ENCODE measurements at regions of chr2 and their contacts with region 1.

Region 1: DNA sequence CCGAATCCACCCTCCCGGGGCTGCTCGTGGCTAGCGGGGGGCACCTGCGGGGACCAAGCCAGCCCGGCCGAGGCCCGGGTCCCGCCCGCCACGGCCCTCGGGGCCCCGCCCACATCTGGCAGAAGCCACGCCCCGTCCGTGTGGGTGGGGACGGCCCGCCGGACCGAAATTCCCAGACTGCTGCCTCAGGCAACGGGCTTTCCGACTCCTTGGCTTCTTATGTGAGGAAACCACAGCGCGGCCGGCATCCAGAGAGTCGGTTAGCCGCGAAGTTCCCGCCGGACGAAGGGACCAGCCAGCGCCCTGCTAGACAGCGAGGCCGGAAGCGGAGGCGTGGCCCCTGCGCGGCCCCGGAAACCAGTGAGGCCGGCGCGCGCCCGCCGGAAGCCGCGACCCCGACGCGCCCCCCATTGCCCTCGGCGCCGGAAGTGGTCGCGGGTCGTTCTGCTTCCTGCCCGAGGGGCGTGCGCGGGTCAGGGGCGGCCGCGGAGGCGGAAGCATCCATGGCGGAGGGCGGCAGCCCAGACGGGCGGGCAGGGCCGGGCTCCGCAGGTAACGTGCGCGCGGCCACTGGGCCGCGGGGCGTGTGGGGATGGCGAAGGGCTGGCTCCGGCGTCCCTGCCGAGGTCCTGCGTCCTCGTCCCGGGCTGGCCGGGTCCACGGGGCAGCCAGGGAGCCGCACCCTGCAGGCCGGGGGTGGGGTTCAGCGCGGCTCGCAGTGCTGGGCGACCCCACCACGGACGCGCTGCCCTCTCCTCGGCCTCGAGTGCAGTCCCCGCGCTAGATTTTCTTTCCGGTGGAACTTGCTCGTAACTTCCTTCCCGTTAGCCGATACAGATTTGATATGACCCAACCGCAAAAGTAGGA is at the start of gene ASB1:
- DNase-seq: peak; percentile 38 to 58 (median 51)
- H3K4me3 ChIP-seq: peak within 1 kb of the TSS; percentile 74 to 93 (median 84)
- H3K4me3 Mint-ChIP-seq: peak within 1 kb of the TSS; percentile 91 to 95
- H3K27ac ChIP-seq: peak within 1 kb of the TSS; percentile 69 to 87
- H3K27ac Mint-ChIP-seq: peak within 1 kb of the TSS; percentile 85 to 96 (median 92)
- H3K4me1 ChIP-seq: peaks cover 24 to 29% of the 10 kb centered on the region in 2 donors
- H3K4me1 Mint-ChIP-seq: peaks cover 47% of the 10 kb centered on the region
- H3K27me3 ChIP-seq: no peaks in the 10 kb centered on the region
- H3K27me3 Mint-ChIP-seq: peaks cover 2 to 3% (median 2%) of the 10 kb centered on the region in 3 donors
- CTCF ChIP-seq: no peak
- polyA plus RNA-seq, gene ASB1: 15.1 to 22.0 (median 16.0) TPM

Region 2: DNA sequence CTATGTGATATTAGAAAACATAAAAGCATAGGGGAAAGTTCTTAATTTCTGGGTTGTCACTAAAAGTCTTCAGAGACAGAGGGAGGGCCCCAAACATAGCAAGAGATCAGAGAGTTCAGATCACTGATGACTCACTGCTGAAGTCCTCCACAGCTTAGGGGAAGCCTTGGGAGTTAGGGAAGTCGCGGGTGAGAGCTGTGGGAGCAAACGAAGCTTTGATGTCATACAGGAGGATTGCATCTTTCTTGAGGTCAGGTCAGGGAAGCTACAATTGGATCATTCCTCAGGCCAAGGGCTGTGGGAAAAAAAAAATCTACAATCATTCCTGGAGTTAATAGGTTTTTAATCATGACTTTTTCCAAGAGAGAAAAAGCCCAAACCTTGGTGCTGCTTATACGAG is 1245.0 kb before region 1 on chr2:
- intact Hi-C with region 1: no loop called
- DNase-seq: no peak
- H3K4me3 ChIP-seq: no peak overlapping the region
- H3K4me3 Mint-ChIP-seq: no peak overlapping the region
- H3K27ac ChIP-seq: no peak overlapping the region
- H3K27ac Mint-ChIP-seq: no peak overlapping the region
- H3K4me1 ChIP-seq: no peaks in the 10 kb centered on the region
- H3K4me1 Mint-ChIP-seq: no peaks in the 10 kb centered on the region
- H3K27me3 ChIP-seq: peaks cover 0 to 2% of the 10 kb centered on the region in 2 donors
- H3K27me3 Mint-ChIP-seq: peaks cover 2 to 21% (median 15%) of the 10 kb centered on the region in 3 donors
- CTCF ChIP-seq: no peak

Region 3: DNA sequence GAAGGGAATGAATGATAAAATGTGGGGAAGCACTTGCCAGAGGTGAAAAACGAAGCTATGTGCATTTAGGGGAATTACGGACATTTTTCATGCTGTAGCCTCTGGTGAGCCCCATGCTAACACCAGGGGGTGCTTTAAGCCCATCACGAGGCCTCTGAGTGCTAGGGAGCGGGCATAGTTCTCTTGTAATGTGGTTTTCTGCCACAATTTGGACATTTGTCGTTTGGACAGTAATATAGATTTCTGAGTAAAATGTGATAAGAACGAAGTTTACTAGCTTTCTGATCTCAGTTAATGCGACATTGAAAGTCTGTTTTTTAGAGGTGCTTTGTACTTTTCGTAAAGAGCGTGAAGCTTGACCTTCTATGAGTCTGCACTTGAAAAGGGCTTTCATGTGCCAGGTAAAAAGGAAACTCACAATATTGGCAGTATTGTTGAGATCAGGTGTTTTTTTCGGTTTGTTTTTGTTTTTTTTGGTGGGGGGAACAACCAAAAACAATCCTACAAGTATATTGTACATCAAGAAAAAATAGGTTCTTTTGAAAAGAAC is 55.9 kb before region 1 on chr2:
- intact Hi-C with region 1: loop called (anchors 2 to 5 kb)
- DNase-seq: peak; percentile 73 to 77 (median 76)
- H3K4me3 ChIP-seq: no peak overlapping the region
- H3K4me3 Mint-ChIP-seq: peak overlapping the region; percentile 11 to 79
- H3K27ac ChIP-seq: no peak overlapping the region
- H3K27ac Mint-ChIP-seq: no peak overlapping the region
- H3K4me1 ChIP-seq: peaks cover 16 to 18% of the 10 kb centered on the region in 2 donors
- H3K4me1 Mint-ChIP-seq: peaks cover 42% of the 10 kb centered on the region
- H3K27me3 ChIP-seq: no peaks in the 10 kb centered on the region
- H3K27me3 Mint-ChIP-seq: peaks cover 0 to 4% (median 0%) of the 10 kb centered on the region in 3 donors
- CTCF ChIP-seq: peak; percentile 80

Region 4: GRCh38 chr2:238379096-238379810 is 47.5 kb before region 1 on chr2:
- intact Hi-C with region 1: loop called in 1 of 2 experiments (anchors 5 kb)
- DNase-seq: peak; percentile 60 to 82 (median 71)
- H3K4me3 ChIP-seq: peak overlapping the region in 1 of 3 experiments; percentile 32
- H3K4me3 Mint-ChIP-seq: peak overlapping the region in 1 of 2 donors; percentile 48
- H3K27ac ChIP-seq: peak overlapping the region; percentile 13 to 54
- H3K27ac Mint-ChIP-seq: peak overlapping the region; percentile 52 to 97 (median 82)
- H3K4me1 ChIP-seq: peaks cover 79 to 87% of the 10 kb centered on the region in 2 donors
- H3K4me1 Mint-ChIP-seq: peaks cover 95% of the 10 kb centered on the region
- H3K27me3 ChIP-seq: no peaks in the 10 kb centered on the region
- H3K27me3 Mint-ChIP-seq: peaks cover 0 to 4% (median 0%) of the 10 kb centered on the region in 3 donors
- CTCF ChIP-seq: no peak

Region 5: GRCh38 chr2:238389926-238390597 is 36.7 kb before region 1 on chr2:
- intact Hi-C with region 1: loop called in 1 of 2 experiments (anchors 5 kb)
- DNase-seq: no peak
- H3K4me3 ChIP-seq: peak overlapping the region in 1 of 3 experiments; percentile 15
- H3K4me3 Mint-ChIP-seq: peak overlapping the region in 1 of 2 donors; percentile 73
- H3K27ac ChIP-seq: peak overlapping the region; percentile 11 to 29
- H3K27ac Mint-ChIP-seq: peak overlapping the region in 5 of 7 donors; percentile 41 to 84 (median 77)
- H3K4me1 ChIP-seq: peaks cover 56 to 63% of the 10 kb centered on the region in 2 donors
- H3K4me1 Mint-ChIP-seq: peaks cover 56% of the 10 kb centered on the region
- H3K27me3 ChIP-seq: no peaks in the 10 kb centered on the region
- H3K27me3 Mint-ChIP-seq: peaks cover 0 to 2% (median 0%) of the 10 kb centered on the region in 3 donors
- CTCF ChIP-seq: no peak

Region 6: GRCh38 chr2:238523158-238524110 is 96.6 kb after region 1 on chr2:
- intact Hi-C with region 1: no loop called
- DNase-seq: no peak
- H3K4me3 ChIP-seq: no peak overlapping the region
- H3K4me3 Mint-ChIP-seq: no peak overlapping the region
- H3K27ac ChIP-seq: no peak overlapping the region
- H3K27ac Mint-ChIP-seq: no peak overlapping the region
- H3K4me1 ChIP-seq: no peaks in the 10 kb centered on the region
- H3K4me1 Mint-ChIP-seq: peaks cover 9% of the 10 kb centered on the region
- H3K27me3 ChIP-seq: no peaks in the 10 kb centered on the region
- H3K27me3 Mint-ChIP-seq: peaks cover 0 to 3% (median 2%) of the 10 kb centered on the region in 3 donors
- CTCF ChIP-seq: no peak